Gastrocnemius medialis (tissue), 4 donors: ENCODE measurements at regions of chr1 and their contacts with region 1.

Region 1: GRCh38 chr1:58783993-58784757 is at the start of gene JUN:
- DNase-seq: peak; percentile 99 to 100
- ATAC-seq: peak; percentile 71 to 74
- H3K4me3 ChIP-seq: peak within 1 kb of the TSS; percentile 89 to 97 (median 94)
- H3K27ac ChIP-seq: peak within 1 kb of the TSS; percentile 91 to 100 (median 99)
- H3K4me1 ChIP-seq: peaks cover 14 to 25% of the 10 kb centered on the region in 2 donors
- H3K27me3 ChIP-seq: no peaks in the 10 kb centered on the region
- CTCF ChIP-seq: peak in 1 of 5 experiments; percentile 21
- POLR2A ChIP-seq: peak; percentile 99 to 100
- total RNA-seq, gene JUN: 41.2 to 104 (median 90.8) TPM

Region 2: GRCh38 chr1:58561633-58562032 is 222.5 kb before region 1 on chr1:
- in situ Hi-C with region 1: no loop called
- intact Hi-C with region 1: no loop called
- DNase-seq: no peak
- ATAC-seq: no peak
- H3K4me3 ChIP-seq: no peak overlapping the region
- H3K27ac ChIP-seq: no peak overlapping the region
- H3K4me1 ChIP-seq: peaks cover 1 to 3% of the 10 kb centered on the region in 2 donors
- H3K27me3 ChIP-seq: no peaks in the 10 kb centered on the region
- CTCF ChIP-seq: no peak
- POLR2A ChIP-seq: no peak

Region 3: GRCh38 chr1:58816072-58816746 is 32.0 kb after region 1 on chr1:
- in situ Hi-C with region 1: no loop called
- intact Hi-C with region 1: loop called (anchors 1 kb)
- DNase-seq: peak; percentile 69 to 84
- ATAC-seq: peak; percentile 79 to 81
- H3K4me3 ChIP-seq: peak overlapping the region; percentile 71 to 82 (median 72)
- H3K27ac ChIP-seq: peak overlapping the region; percentile 89 to 94 (median 92)
- H3K4me1 ChIP-seq: peaks cover 0 to 6% of the 10 kb centered on the region in 2 donors
- H3K27me3 ChIP-seq: no peaks in the 10 kb centered on the region
- CTCF ChIP-seq: peak in 1 of 5 experiments; percentile 30
- POLR2A ChIP-seq: peak; percentile 37 to 50

Region 4: GRCh38 chr1:58968360-58968952 is 184.3 kb after region 1 on chr1:
- in situ Hi-C with region 1: no loop called
- intact Hi-C with region 1: loop called (anchors 2 kb)
- DNase-seq: peak; percentile 82 to 93
- ATAC-seq: peak; percentile 53 to 54
- H3K4me3 ChIP-seq: no peak overlapping the region
- H3K27ac ChIP-seq: peak overlapping the region; percentile 90 to 96 (median 93)
- H3K4me1 ChIP-seq: peaks cover 62 to 65% of the 10 kb centered on the region in 2 donors
- H3K27me3 ChIP-seq: no peaks in the 10 kb centered on the region
- CTCF ChIP-seq: peak in 1 of 5 experiments; percentile 11
- POLR2A ChIP-seq: peak; percentile 45 to 63

Region 5: GRCh38 chr1:59107516-59107915 is 323.3 kb after region 1 on chr1:
- in situ Hi-C with region 1: no loop called
- intact Hi-C with region 1: loop called (anchors 5 kb)
- DNase-seq: peak; percentile 87 to 92
- ATAC-seq: peak; percentile 98 to 99
- H3K4me3 ChIP-seq: no peak overlapping the region
- H3K27ac ChIP-seq: peak overlapping the region; percentile 76 to 87 (median 79)
- H3K4me1 ChIP-seq: peaks cover 11 to 17% of the 10 kb centered on the region in 2 donors
- H3K27me3 ChIP-seq: no peaks in the 10 kb centered on the region
- CTCF ChIP-seq: no peak
- POLR2A ChIP-seq: no peak

Region 6: DNA sequence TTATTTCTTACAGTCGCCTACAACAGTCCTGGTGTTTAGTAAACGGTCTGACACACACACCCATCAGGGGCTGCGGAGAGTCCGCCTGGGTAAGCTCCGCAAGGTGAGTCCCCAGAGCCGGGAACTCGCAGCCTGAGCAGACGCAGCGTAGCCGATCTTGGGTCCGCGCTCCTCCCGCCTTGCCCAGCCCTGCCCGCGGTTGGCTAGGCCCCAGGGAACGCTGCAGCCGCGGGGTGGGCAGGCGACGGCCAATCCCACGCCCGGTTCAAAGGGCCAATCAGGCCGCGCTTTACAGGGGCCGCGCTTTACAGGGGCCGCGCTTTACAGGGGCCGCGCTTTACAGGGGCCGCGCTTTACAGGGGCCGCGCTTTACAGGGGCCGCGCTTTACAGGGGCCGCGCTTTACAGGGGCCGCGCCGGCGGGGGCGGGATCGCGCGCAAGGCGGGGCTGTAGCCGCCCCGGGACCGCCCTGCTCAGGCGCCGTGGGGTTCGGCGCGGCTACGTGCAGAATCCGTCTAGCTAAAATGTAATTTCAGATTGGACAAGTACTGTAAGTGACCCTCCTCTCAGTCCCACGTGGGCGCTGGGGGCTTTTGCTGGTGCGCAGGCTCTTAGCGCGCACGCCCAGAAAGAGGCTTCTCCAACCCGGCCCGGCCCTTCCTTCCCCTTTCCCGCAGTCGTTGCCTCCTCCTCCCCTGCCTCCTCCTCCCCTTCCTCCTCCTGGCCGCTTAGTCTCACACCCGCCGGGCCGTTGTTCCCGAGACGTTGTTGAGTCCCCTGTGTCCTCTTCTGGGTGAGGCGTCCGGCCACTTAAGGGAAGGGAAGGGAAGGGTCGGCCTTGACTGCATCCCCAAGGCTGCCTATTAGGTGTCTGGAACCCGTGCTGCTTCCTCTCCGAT is 512.4 kb after region 1 on chr1 and contains the start of gene FGGY:
- in situ Hi-C with region 1: loop called (anchors 10 kb)
- intact Hi-C with region 1: loop called (anchors 1 kb)
- DNase-seq: peak; percentile 97 to 98
- ATAC-seq: peak; percentile 80 to 83
- H3K4me3 ChIP-seq: peak within 1 kb of the TSS; percentile 53 to 82 (median 70)
- H3K27ac ChIP-seq: peak within 1 kb of the TSS; percentile 90 to 99 (median 96)
- H3K4me1 ChIP-seq: peaks cover 17 to 48% of the 10 kb centered on the region in 2 donors
- H3K27me3 ChIP-seq: no peaks in the 10 kb centered on the region
- CTCF ChIP-seq: no peak
- POLR2A ChIP-seq: peak; percentile 84 to 86
- total RNA-seq, gene FGGY: 24.9 to 35.9 (median 30.5) TPM

Region 7: GRCh38 chr1:59506952-59507351 is 722.8 kb after region 1 on chr1:
- in situ Hi-C with region 1: no loop called
- intact Hi-C with region 1: loop called (anchors 5 kb)
- DNase-seq: peak; percentile 61 to 81
- ATAC-seq: peak; percentile 97 to 98
- H3K4me3 ChIP-seq: peak overlapping the region; percentile 8 to 37 (median 24)
- H3K27ac ChIP-seq: peak overlapping the region; percentile 45 to 72 (median 66)
- H3K4me1 ChIP-seq: peaks cover 24 to 29% of the 10 kb centered on the region in 2 donors
- H3K27me3 ChIP-seq: no peaks in the 10 kb centered on the region
- CTCF ChIP-seq: no peak
- POLR2A ChIP-seq: no peak

Region 8: DNA sequence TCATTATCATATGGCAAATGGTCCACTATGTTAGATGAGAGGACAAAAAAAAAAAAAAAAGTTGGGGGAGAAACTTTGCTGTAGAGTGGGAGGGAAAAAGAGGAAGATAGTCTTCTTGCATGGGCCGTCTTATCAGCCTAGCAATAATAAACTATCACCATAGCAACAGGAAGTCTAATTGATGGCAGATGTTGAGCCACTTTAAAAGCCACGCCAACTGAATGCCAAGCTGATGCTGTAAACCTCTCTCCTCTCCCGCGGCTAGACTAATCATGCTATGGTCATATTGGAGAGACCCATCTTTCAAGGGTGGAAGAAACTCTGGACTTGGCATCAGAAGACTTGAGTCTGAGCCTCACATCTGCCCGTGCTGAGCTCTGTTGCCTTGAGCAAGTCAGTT is 908.4 kb after region 1 on chr1:
- in situ Hi-C with region 1: loop called in 2 of 4 experiments (anchors 10 kb)
- intact Hi-C with region 1: loop called (anchors 5 kb)
- DNase-seq: no peak
- ATAC-seq: no peak
- H3K4me3 ChIP-seq: no peak overlapping the region
- H3K27ac ChIP-seq: peak overlapping the region; percentile 85 to 89 (median 87)
- H3K4me1 ChIP-seq: peaks cover 60 to 63% of the 10 kb centered on the region in 2 donors
- H3K27me3 ChIP-seq: no peaks in the 10 kb centered on the region
- CTCF ChIP-seq: no peak
- POLR2A ChIP-seq: no peak